MCF 10A (cell line): ENCODE measurements at regions of chr1 and their contacts with region 1.

Region 1: DNA sequence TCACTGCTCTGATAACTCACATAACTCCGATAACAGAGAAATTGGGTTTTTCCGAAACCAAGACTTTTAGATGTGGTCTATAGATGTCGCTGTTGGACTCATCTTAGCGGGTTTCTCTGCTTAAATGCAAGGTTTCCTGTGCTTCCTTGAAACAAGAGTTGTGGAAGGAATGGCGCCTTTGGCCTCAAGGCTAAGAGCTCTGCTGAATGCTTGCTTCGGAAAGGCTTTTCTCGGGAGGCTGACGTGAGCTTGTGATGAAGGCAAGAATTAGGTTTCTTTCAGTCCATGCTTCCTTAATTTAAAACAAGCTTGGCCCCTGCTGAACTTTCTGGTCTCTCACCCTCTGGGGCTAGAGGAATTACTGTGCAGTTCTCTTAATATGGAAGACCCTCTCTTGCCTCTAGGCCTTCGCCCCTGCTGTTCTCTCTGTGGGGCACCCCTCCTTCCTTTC is 113.5 kb downstream of the MAP3K21 start:
- DNase-seq: peak; percentile 90
- H3K4me3 Mint-ChIP-seq: no peak overlapping the region
- H3K27ac Mint-ChIP-seq: no peak overlapping the region
- H3K4me1 Mint-ChIP-seq: peaks cover 18% of the 10 kb centered on the region
- H3K27me3 Mint-ChIP-seq: no peaks in the 10 kb centered on the region
- CTCF ChIP-seq: peak; percentile 99

Region 2: GRCh38 chr1:233229288-233229687 is 211.7 kb before region 1 on chr1:
- CTCF ChIA-PET with region 1: no interaction called
- POLR2A ChIA-PET with region 1: no interaction called
- intact Hi-C with region 1: no loop called
- DNase-seq: no peak
- H3K4me3 Mint-ChIP-seq: no peak overlapping the region
- H3K27ac Mint-ChIP-seq: no peak overlapping the region
- H3K4me1 Mint-ChIP-seq: no peaks in the 10 kb centered on the region
- H3K27me3 Mint-ChIP-seq: no peaks in the 10 kb centered on the region
- CTCF ChIP-seq: no peak

Region 3: DNA sequence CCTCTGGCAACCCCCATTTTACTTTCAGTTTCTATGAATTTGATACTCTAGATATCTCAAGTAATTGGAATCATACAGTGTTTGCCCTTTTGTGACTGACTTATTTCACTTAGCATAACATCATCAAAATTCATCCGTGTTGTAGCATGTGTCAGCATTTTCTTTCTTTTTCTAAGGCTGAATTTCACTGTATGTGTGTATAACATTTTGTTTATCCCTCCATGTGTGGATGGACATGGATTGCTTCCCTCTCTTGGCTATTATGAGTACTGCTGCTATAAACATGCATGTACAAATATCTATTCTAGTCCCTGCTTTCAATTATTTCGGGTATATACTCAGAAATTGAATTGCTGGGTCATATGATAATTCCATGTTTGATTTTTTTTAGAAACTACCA is 16.2 kb before region 1 on chr1:
- CTCF ChIA-PET with region 1: interaction called, 106 read pairs
- POLR2A ChIA-PET with region 1: interaction called, 3 read pairs
- intact Hi-C with region 1: no loop called
- DNase-seq: peak; percentile 54
- H3K4me3 Mint-ChIP-seq: no peak overlapping the region
- H3K27ac Mint-ChIP-seq: no peak overlapping the region
- H3K4me1 Mint-ChIP-seq: peaks cover 5% of the 10 kb centered on the region
- H3K27me3 Mint-ChIP-seq: no peaks in the 10 kb centered on the region
- CTCF ChIP-seq: peak; percentile 40

Region 4: DNA sequence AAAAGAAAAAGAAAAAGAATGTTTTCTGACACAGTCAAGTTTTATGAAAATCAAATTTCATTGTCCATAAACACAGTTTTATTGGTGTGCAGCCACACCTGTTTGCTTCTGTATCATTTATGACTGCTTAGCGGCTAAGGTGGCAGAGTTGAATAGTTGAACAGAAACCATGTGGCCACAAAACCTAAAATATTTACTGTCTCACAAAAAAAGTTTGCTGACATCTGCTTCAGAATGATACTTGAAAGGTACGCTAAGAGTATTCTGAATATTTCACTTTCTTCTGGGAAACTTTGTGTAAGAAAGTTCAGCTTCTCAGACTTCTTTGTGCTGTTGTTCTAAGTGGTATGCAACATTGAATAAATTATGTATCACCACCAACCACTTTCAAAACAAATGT is 179.1 kb after region 1 on chr1:
- CTCF ChIA-PET with region 1: interaction called, 18 read pairs
- POLR2A ChIA-PET with region 1: interaction called, 15 read pairs
- intact Hi-C with region 1: loop called (anchors 1 kb)
- DNase-seq: no peak
- H3K4me3 Mint-ChIP-seq: no peak overlapping the region
- H3K27ac Mint-ChIP-seq: no peak overlapping the region
- H3K4me1 Mint-ChIP-seq: peaks cover 20% of the 10 kb centered on the region
- H3K27me3 Mint-ChIP-seq: no peaks in the 10 kb centered on the region
- CTCF ChIP-seq: no peak

Region 5: GRCh38 chr1:233707153-233707879 is 266.3 kb after region 1 on chr1:
- CTCF ChIA-PET with region 1: interaction called, 29 read pairs
- POLR2A ChIA-PET with region 1: interaction called, 3 read pairs
- intact Hi-C with region 1: loop called (anchors 5 kb)
- DNase-seq: peak; percentile 99
- H3K4me3 Mint-ChIP-seq: no peak overlapping the region
- H3K27ac Mint-ChIP-seq: peak overlapping the region; percentile 87
- H3K4me1 Mint-ChIP-seq: peaks cover 46% of the 10 kb centered on the region
- H3K27me3 Mint-ChIP-seq: no peaks in the 10 kb centered on the region
- CTCF ChIP-seq: no peak

Region 6: GRCh38 chr1:233815865-233816264 is 374.9 kb after region 1 on chr1:
- CTCF ChIA-PET with region 1: interaction called, 10 read pairs
- POLR2A ChIA-PET with region 1: no interaction called
- intact Hi-C with region 1: no loop called
- DNase-seq: no peak
- H3K4me3 Mint-ChIP-seq: no peak overlapping the region
- H3K27ac Mint-ChIP-seq: no peak overlapping the region
- H3K4me1 Mint-ChIP-seq: no peaks in the 10 kb centered on the region
- H3K27me3 Mint-ChIP-seq: peaks cover 45% of the 10 kb centered on the region
- CTCF ChIP-seq: no peak

Region 7: GRCh38 chr1:234114648-234115307 is 673.8 kb after region 1 on chr1:
- CTCF ChIA-PET with region 1: interaction called, 22 read pairs
- POLR2A ChIA-PET with region 1: interaction called, 5 read pairs
- intact Hi-C with region 1: loop called (anchors 2 kb)
- DNase-seq: peak; percentile 84
- H3K4me3 Mint-ChIP-seq: peak overlapping the region; percentile 57
- H3K27ac Mint-ChIP-seq: no peak overlapping the region
- H3K4me1 Mint-ChIP-seq: peaks cover 13% of the 10 kb centered on the region
- H3K27me3 Mint-ChIP-seq: no peaks in the 10 kb centered on the region
- CTCF ChIP-seq: peak; percentile 97